ENCODE measurements at regions of chr12 and their contacts with region 1.

Region 1: GRCh38 chr12:23376238-23376637 is 573.2 kb downstream of the SOX5 start:
- DNase-seq: peak in 1 of 2 experiments; percentile 45
- H3K4me3 ChIP-seq: no peak overlapping the region
- H3K27ac ChIP-seq: no peak overlapping the region
- H3K4me1 ChIP-seq: no peaks in the 10 kb centered on the region
- H3K27me3 ChIP-seq: no peaks in the 10 kb centered on the region
- CTCF ChIP-seq: peak in 2 of 3 experiments; percentile 38 to 54; a peak in 3 of 4 replicates
- EP300 ChIP-seq: no peak
- POLR2A ChIP-seq: no peak
- RAD21 ChIP-seq: peak; percentile 61 to 73

Region 2: GRCh38 chr12:23361971-23362370 is 14.3 kb before region 1 on chr12:
- CTCF ChIA-PET with region 1: interaction called, 14 read pairs
- POLR2A ChIA-PET with region 1: no interaction called
- DNase-seq: no peak
- H3K4me3 ChIP-seq: no peak overlapping the region
- H3K27ac ChIP-seq: no peak overlapping the region
- H3K4me1 ChIP-seq: no peaks in the 10 kb centered on the region
- H3K27me3 ChIP-seq: no peaks in the 10 kb centered on the region
- CTCF ChIP-seq: peak in 2 of 3 experiments; percentile 22 to 46; a peak in 2 of 4 replicates
- EP300 ChIP-seq: no peak
- POLR2A ChIP-seq: no peak
- RAD21 ChIP-seq: peak; percentile 37 to 46; a peak in 3 of 4 replicates

Region 3: DNA sequence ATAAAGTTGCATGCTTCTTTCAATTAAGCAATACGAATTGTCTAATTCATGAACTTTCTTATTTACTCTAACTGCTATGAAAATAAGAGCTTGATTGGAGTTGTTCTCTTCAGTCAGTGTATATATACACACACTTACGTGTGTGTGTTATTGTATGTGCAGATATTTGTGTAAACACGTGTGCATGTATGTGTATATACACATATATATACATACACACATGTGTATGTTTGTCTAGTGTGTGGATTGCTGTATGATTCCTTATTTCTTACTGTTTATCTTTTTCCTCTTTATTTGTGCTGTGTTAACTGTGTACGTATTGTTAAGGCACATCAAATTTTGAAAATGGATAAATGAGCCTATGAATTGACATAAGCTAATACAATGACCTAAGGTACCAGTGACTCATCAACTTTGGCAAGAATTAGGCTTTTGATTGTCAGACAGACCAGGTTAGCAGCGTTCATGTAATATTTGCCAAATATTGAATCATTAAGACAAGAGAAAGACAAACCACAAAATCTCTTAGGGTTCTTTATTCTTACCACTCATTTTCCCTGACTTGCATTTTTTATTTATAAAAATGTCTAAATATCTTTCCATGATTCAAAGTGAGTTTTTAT is 149.3 kb after region 1 on chr12:
- CTCF ChIA-PET with region 1: no interaction called
- POLR2A ChIA-PET with region 1: no interaction called
- DNase-seq: no peak
- H3K4me3 ChIP-seq: no peak overlapping the region
- H3K27ac ChIP-seq: no peak overlapping the region
- H3K4me1 ChIP-seq: no peaks in the 10 kb centered on the region
- H3K27me3 ChIP-seq: no peaks in the 10 kb centered on the region
- CTCF ChIP-seq: no peak
- EP300 ChIP-seq: no peak
- POLR2A ChIP-seq: no peak
- RAD21 ChIP-seq: no peak